MCF 10A (cell line): ENCODE measurements at regions of chr21 and their contacts with region 1.

Region 1: GRCh38 chr21:29939104-29939923 is 482 bp downstream of the GRIK1 start:
- DNase-seq: no peak
- H3K4me3 Mint-ChIP-seq: peak overlapping the region; percentile 32
- H3K27ac Mint-ChIP-seq: no peak overlapping the region
- H3K4me1 Mint-ChIP-seq: peaks cover 7% of the 10 kb centered on the region
- H3K27me3 Mint-ChIP-seq: peaks cover 65% of the 10 kb centered on the region
- CTCF ChIP-seq: no peak

Region 2: DNA sequence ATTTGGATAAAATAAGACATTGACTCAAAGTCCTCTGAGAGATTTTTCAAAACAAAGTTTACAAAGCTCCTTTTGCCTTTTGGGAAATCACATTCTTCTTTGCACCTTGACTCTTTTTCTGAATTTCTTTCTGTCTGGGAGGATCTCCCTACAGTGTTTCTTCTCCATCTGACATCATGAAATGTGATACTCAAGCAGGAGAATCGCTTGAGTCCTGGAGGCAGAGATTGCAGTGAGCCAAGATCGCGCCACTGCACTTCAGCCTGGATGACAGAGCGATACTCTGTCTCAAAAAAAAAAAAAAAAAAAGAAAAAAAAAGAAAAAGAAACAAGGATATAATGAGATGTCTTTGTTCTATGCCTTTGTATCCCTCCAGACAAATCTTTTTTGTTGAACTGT is 13.8 kb after region 1 on chr21:
- CTCF ChIA-PET with region 1: interaction called, 14 read pairs
- POLR2A ChIA-PET with region 1: interaction called, 3 read pairs
- intact Hi-C with region 1: no loop called
- DNase-seq: peak; percentile 6
- H3K4me3 Mint-ChIP-seq: no peak overlapping the region
- H3K27ac Mint-ChIP-seq: no peak overlapping the region
- H3K4me1 Mint-ChIP-seq: peaks cover 11% of the 10 kb centered on the region
- H3K27me3 Mint-ChIP-seq: peaks cover 72% of the 10 kb centered on the region
- CTCF ChIP-seq: no peak

Region 3: DNA sequence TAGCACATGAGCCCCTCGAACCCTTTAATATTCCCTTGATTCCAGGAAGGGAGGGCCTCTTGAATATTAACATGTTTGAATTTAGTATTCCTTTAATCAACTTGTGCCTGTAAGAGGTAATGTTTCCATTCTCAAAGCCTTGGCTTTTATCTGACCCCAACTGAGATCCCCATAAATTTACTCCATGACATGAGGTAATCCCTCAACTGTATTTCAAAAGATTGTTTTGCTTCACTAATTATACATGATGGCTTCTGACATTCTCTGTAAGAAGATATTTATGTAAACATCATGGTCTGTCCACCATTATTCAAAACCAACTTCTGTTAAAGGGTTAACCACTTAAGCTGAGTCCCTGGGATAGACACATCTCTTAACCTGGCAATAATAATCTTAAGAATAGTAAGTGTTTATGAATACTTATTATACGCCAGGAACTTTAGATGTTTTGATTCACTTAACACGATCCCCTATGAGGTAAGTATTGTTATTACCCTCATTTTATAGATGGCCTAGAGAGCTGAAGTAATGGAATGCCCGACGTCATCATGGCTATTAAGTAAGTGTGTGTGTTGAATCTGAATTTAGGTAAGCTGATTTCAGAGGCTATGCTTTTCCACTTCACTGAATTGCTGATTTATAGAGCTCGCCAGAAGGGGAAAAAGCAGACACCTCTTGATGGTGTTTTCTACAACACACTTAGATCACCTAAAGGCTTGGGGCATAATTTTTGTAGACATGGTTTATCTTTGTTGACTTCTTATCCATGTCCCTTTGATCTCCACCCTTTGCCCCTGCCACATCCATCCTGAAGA is 529.8 kb after region 1 on chr21:
- CTCF ChIA-PET with region 1: no interaction called
- POLR2A ChIA-PET with region 1: no interaction called
- intact Hi-C with region 1: no loop called
- DNase-seq: no peak
- H3K4me3 Mint-ChIP-seq: no peak overlapping the region
- H3K27ac Mint-ChIP-seq: no peak overlapping the region
- H3K4me1 Mint-ChIP-seq: no peaks in the 10 kb centered on the region
- H3K27me3 Mint-ChIP-seq: peaks cover 95% of the 10 kb centered on the region
- CTCF ChIP-seq: no peak